A549 (cell line): ENCODE measurements at regions of chr12 and their contacts with region 1.

Region 1: GRCh38 chr12:48681738-48682532 is at the start of gene KANSL2:
- DNase-seq: peak; percentile 99
- ATAC-seq: peak; percentile 98
- H3K4me3 ChIP-seq: peak within 1 kb of the TSS; percentile 58
- H3K27ac ChIP-seq: peak within 1 kb of the TSS; percentile 93 to 98
- H3K4me1 ChIP-seq: peaks cover 32% of the 10 kb centered on the region
- CTCF ChIP-seq: no peak
- EP300 ChIP-seq: no peak
- POLR2A ChIP-seq: peak; percentile 98
- RAD21 ChIP-seq: no peak
- polyA plus RNA-seq, gene KANSL2: 59.4 and 62.8 TPM in 2 replicates

Region 2: DNA sequence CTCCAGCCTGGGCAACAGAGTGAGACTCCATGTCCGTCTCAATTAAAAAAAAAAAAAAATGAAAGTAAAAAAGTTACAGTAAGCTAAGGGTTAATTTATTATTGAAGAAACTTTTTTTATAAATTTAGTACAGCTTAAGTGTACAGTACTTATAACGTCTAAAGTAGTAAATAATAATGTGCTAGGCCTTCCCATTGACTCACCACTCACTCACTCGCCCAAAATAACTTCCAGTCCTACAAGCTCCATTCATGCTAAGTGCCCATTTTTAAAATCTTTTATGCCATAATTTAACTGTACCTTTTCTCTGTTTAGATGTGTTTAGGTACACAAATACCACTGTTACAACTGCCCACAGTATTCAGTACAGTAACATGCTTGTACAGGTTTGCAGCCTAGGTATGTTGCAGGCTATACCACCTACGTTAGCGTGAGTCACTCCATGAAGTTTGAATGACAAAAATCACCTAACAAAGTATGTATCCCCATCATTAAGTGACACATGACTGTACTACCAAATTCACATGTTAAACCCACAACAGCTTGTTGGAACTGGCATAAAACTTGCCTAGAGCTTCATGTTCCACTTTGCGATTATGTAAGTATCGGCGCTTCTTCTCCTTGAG is 10.6 kb before region 1 on chr12:
- CTCF ChIA-PET with region 1: no interaction called
- POLR2A ChIA-PET with region 1: interaction called, 10 read pairs
- DNase-seq: no peak
- ATAC-seq: peak in 1 of 2 experiments; percentile 42; a peak in 2 of 6 replicates
- H3K4me3 ChIP-seq: no peak overlapping the region
- H3K27ac ChIP-seq: no peak overlapping the region
- H3K4me1 ChIP-seq: no peaks in the 10 kb centered on the region
- CTCF ChIP-seq: no peak
- EP300 ChIP-seq: no peak
- POLR2A ChIP-seq: no peak
- RAD21 ChIP-seq: no peak

Region 3: DNA sequence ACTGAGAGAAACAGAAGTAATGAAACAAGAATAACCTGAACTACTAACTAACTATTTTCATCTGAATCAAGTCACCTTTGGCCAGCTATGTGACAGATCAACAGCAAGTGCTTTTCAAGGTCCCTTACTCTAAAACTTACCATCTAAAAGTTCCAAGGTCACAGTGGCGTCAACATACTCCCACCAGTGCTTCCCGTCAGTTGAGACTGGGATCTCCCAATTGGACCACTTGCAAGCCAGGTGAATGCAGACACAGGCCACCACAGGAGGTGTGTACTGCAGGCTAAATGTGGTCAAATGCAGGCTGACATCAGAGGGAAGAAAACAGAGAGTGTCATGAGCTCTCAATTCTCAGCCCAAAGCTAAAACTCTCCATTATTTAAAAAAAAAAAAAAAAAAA is 13.9 kb after region 1 on chr12:
- CTCF ChIA-PET with region 1: no interaction called
- POLR2A ChIA-PET with region 1: interaction called, 11 read pairs
- DNase-seq: no peak
- ATAC-seq: no peak
- H3K4me3 ChIP-seq: no peak overlapping the region
- H3K27ac ChIP-seq: no peak overlapping the region
- H3K4me1 ChIP-seq: 0 out of 3 replicates have a peak, but pooled peaks cover 6% of the 10 kb centered on the region
- CTCF ChIP-seq: no peak
- EP300 ChIP-seq: no peak
- POLR2A ChIP-seq: no peak
- RAD21 ChIP-seq: no peak

Region 4: GRCh38 chr12:48728807-48729206 is 46.9 kb after region 1 on chr12:
- CTCF ChIA-PET with region 1: no interaction called
- POLR2A ChIA-PET with region 1: no interaction called
- DNase-seq: no peak
- ATAC-seq: no peak
- H3K4me3 ChIP-seq: no peak overlapping the region
- H3K27ac ChIP-seq: no peak overlapping the region
- H3K4me1 ChIP-seq: no peaks in the 10 kb centered on the region
- CTCF ChIP-seq: no peak
- EP300 ChIP-seq: no peak
- POLR2A ChIP-seq: no peak
- RAD21 ChIP-seq: no peak

Region 5: GRCh38 chr12:48882315-48882687 is 200.4 kb after region 1 on chr12:
- CTCF ChIA-PET with region 1: no interaction called
- POLR2A ChIA-PET with region 1: no interaction called
- DNase-seq: peak in 1 of 2 experiments; percentile 74
- ATAC-seq: peak; percentile 61 to 66
- H3K4me3 ChIP-seq: peak overlapping the region; percentile 29
- H3K27ac ChIP-seq: peak overlapping the region; percentile 88 to 90
- H3K4me1 ChIP-seq: peaks cover 59% of the 10 kb centered on the region
- CTCF ChIP-seq: no peak
- EP300 ChIP-seq: 0 out of 5 replicates have a peak, but pooled peaks of 1 of the 2 experiments have one; percentile 8
- POLR2A ChIP-seq: no peak
- RAD21 ChIP-seq: no peak